Activated B cell treated with CpG ODN at 0.5 μM for 24 hours (primary cell): ENCODE measurements at regions of chr16 and their contacts with region 1.

Region 1: DNA sequence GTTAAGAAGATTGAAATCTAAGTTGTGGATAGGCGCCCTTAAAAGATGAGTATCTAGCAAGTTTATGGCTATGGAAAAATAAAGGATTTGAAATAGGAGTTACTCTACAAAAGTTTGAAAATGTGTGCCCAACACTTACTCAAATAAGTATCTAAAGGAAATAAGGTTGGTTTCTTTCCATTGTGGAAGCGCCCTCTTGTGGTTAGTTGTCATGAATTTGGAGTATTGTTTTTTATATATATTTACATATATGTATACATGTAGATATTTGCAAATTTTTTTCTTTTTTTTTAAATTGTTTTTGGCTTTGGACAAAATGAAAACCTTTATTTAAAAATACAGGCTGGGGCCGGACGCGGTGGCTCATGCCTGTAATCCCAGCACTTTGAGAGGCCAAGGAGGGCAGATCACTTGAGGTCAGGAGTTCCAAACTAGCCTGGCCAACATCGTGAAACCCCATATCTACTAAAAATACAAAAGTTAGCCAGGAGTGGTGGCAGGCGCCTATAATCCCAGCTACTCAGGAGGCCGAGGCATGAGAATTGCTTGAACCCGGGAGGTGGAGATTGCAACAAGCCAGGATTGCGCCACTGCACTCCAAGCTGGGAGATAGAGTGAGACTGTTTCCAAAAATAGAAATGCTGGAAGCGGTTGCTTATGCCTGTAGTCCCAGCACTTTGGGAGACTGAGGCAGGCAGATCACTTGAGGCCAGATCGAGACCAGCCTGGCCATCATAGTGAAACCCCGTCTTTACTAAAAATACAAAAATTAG is 24.0 kb upstream of the VPS4A start:
- DNase-seq: no peak
- ATAC-seq: no peak
- H3K4me3 Mint-ChIP-seq: no peak overlapping the region
- H3K27ac Mint-ChIP-seq: no peak overlapping the region
- H3K4me1 Mint-ChIP-seq: no peaks in the 10 kb centered on the region
- H3K27me3 Mint-ChIP-seq: no peaks in the 10 kb centered on the region
- CTCF ChIP-seq: peak; percentile 18

Region 2: DNA sequence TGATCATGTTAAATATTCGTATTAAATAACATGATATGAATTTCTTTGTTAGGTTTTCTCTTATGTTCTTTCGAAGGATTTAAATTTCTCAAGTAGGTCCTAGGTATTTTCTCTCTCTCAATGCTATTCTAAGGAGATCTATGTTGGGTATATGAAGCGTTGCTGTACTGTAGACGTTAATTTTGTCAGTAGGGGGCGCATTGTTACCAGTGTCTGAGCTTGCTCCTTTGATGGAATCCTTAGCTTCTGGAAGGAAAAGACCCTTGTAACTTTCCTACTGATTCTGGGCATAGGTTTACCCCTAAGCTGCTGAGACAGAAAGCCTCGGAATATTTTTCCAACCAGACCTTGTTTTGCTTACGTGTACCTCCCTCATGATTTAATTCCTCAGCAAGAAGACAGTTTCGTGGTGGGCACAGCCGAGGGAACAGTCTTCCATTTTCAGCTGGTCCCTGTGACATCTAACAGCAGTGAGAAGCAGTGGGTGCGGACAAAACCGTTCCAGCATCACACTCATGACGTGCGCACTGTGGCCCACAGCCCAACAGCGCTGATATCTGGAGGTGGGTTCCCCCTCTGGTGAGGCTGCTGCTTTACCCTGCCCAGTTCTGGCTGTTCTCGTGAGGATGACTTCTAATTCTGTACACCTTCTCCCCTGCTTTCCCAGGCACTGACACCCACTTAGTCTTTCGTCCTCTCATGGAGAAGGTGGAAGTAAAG is 136.8 kb before region 1 on chr16:
- CTCF ChIA-PET with region 1: interaction called, 163 read pairs
- POLR2A ChIA-PET with region 1: interaction called, 6 read pairs
- intact Hi-C with region 1: no loop called
- DNase-seq: no peak
- ATAC-seq: peak; percentile 64
- H3K4me3 Mint-ChIP-seq: no peak overlapping the region
- H3K27ac Mint-ChIP-seq: no peak overlapping the region
- H3K4me1 Mint-ChIP-seq: no peaks in the 10 kb centered on the region
- H3K27me3 Mint-ChIP-seq: no peaks in the 10 kb centered on the region
- CTCF ChIP-seq: no peak